ENCODE measurements at regions of chr6 and their contacts with region 1.

Region 1: DNA sequence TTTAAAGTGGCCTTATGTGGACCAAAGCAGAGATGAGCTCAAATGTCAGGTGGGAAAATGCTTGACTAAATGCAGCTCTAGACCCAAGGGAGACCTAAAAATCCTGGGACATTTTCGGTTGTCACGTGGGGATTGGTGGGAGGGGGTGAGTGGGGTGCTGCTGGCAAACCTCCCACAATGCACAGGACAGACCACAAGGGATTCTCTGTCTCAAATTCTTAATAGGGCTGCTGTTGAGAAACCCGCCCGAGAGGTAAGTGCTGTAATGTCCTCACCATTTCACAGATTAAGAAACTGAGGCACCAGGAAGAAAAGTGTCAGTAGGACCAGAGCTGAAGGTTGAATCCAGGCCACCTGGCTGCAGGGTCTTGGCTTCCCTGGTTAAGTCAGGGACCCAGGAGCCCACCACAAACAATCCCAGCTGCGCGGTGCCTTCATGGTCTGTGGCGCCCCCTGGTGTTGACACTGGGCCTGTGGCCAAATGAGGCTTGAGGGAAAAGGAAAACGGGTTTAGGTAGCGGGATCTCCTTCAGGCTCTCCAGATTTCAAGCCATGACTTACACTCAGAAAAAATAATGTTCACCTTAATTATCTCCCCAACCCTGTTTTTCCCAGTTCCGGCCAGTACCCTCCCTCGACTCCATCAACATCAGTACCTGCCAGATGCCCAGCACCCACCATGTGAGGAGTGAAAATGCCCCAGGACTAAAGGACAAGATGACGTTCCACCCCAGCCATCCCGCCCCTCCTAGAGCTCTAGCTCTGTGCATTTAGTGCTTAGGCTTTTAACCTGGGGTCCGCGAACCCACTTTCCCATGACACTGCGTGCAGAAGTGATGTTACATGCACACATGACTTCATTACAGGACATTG is 7.2 kb downstream of the HLA-G start:
- DNase-seq: peak; percentile 27 to 36
- ATAC-seq: peak in 2 of 4 donors; percentile 46 to 65
- H3K4me3 ChIP-seq: no peak overlapping the region
- H3K27ac ChIP-seq: no peak overlapping the region
- H3K4me1 ChIP-seq: no peaks in the 10 kb centered on the region
- H3K27me3 ChIP-seq: peaks cover 0 to 50% (median 5%) of the 10 kb centered on the region in 3 donors
- CTCF ChIP-seq: peak; percentile 91

Region 2: DNA sequence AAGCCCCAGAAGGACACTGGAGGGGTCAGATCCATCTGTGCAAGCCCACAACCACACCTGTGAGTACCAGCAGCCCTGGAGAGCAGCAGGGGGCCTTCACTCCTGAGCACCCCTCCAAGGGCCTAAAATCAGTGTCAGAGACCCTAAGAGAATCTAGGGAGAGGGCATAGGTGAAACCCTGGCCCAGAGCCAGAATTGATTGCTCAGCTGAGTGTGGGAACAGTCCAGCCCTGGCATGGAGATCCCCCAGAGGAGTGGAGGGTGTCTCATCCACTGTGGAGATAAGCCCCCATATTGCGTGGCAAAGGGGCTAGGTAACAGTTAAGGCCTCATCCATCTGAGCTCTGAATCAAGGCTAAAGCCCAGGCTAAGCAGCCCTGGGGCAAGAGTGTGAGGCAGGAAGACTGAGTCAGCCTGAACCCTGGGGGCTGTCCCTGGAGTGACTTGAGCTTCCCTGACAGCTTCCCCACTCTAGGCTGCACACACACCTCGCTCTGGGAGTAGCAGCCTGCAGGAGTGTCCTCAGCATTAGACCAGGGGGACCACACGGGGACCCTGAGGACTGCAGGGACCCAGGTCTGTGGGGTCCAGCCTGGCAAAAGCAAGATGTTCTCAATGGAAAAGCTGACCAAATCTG is 303.3 kb before region 1 on chr6:
- intact Hi-C with region 1: no loop called
- DNase-seq: no peak
- ATAC-seq: no peak
- H3K4me3 ChIP-seq: no peak overlapping the region
- H3K27ac ChIP-seq: no peak overlapping the region
- H3K4me1 ChIP-seq: no peaks in the 10 kb centered on the region
- H3K27me3 ChIP-seq: no peaks in the 10 kb centered on the region
- CTCF ChIP-seq: no peak

Region 3: DNA sequence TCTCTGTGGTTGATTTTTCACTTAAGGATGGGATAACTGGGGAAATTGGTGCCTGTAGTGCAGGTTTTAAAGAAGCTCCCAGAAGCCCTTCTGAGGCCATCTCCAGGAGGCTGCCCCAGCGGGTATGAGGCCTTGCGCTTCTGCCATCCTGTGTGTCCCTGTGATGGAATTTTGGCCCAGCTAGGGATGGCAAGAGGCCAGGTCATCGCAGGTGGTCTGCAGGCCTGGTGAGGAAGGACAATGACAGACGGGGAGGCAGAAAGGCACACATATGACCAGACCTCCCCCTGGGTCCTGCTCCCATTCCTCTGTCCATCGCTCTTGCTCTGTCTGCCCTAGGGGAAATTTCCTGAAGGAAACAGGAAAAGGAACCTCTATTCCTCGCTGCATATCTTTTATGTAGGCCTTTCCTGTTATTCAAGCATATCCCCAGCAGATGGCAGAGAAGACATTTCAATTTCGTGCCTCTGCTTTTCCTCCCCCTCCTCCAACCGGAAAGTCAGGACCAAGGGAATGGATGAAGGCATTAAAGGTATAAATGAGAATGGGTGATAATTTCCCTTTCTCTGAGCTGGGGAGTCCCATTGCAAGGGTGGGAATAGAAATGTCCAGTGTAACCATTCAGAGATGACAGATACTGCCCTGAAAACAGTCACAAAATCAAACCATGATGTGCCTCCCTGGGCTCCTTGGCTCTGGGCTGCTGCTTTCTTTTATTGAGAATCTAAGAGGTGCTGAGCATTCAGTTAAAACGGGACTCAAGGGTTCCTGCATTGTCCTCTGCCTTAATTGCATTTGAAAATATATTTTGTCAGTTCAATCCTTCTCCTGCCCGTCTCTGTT is 129.2 kb before region 1 on chr6:
- intact Hi-C with region 1: loop called (anchors 1 to 10 kb)
- DNase-seq: no peak
- ATAC-seq: peak in 2 of 4 donors; percentile 46 to 48
- H3K4me3 ChIP-seq: no peak overlapping the region
- H3K27ac ChIP-seq: no peak overlapping the region
- H3K4me1 ChIP-seq: no peaks in the 10 kb centered on the region
- H3K27me3 ChIP-seq: peaks cover 0 to 20% (median 4%) of the 10 kb centered on the region in 3 donors
- CTCF ChIP-seq: peak; percentile 46

Region 4: GRCh38 chr6:29737707-29738630 is 96.8 kb before region 1 on chr6:
- intact Hi-C with region 1: loop called (anchors 1 to 5 kb)
- DNase-seq: peak; percentile 53 to 65
- ATAC-seq: peak; percentile 84 to 95 (median 88)
- H3K4me3 ChIP-seq: no peak overlapping the region
- H3K27ac ChIP-seq: no peak overlapping the region
- H3K4me1 ChIP-seq: no peaks in the 10 kb centered on the region
- H3K27me3 ChIP-seq: no peaks in the 10 kb centered on the region
- CTCF ChIP-seq: peak; percentile 70

Region 5: GRCh38 chr6:30053682-30054081 is 218.9 kb after region 1 on chr6:
- intact Hi-C with region 1: no loop called
- DNase-seq: no peak
- ATAC-seq: no peak
- H3K4me3 ChIP-seq: no peak overlapping the region
- H3K27ac ChIP-seq: no peak overlapping the region
- H3K4me1 ChIP-seq: no peaks in the 10 kb centered on the region
- H3K27me3 ChIP-seq: no peaks in the 10 kb centered on the region
- CTCF ChIP-seq: no peak

Measured in psoas muscle (tissue), 8 donors.